B cell (primary cell): ENCODE measurements at regions of chr5 and their contacts with region 1.

Region 1: DNA sequence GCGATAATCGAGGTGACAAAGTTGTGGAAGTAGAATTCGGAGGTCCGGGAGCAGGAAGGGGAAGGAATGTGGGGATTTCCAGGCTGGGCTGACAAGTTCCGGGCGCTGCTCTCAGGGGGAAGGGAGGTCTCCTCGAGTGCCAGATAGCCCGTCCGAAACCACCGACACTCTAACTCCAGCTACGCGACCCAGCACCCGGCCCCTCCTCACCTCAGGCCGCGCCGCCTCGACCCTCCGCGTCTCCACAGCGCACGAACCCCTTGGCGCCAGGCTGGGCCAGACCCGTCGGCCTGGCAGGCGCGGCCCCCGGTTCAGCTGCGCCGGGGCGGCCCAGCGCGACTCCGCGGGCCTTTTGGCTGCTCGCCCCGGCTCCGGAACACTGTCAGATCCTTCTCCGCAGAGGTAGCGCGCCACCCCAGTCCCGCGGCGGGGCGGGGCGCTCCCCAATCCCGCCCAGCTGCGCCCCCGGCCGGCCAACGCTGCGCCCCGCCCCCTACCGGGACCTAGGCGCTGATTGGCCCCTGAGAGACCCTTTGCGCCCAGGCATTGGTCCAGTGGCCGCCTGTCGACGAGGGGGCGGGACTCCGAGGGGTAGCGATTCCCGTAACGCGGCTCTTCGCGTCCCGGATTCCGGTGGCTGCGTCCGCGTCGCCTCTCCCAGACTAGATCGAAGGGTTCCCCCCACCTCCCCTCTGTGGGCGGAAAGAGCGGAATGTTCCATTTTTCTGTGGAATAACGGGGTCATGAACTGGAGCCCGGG is at the start of gene IL6ST:
- DNase-seq: peak; percentile 96
- ATAC-seq: peak; percentile 94
- H3K4me3 ChIP-seq: peak within 1 kb of the TSS; percentile 75 to 97 (median 91)
- H3K4me3 Mint-ChIP-seq: peak within 1 kb of the TSS; percentile 89
- H3K27ac ChIP-seq: peak within 1 kb of the TSS; percentile 75 to 94
- H3K27ac Mint-ChIP-seq: peak within 1 kb of the TSS; percentile 78
- H3K4me1 ChIP-seq: peaks cover 11 to 18% of the 10 kb centered on the region in 2 donors
- H3K4me1 Mint-ChIP-seq: peaks cover 33% of the 10 kb centered on the region
- H3K27me3 ChIP-seq: no peaks in the 10 kb centered on the region
- H3K27me3 Mint-ChIP-seq: peaks cover 4% of the 10 kb centered on the region
- CTCF ChIP-seq: no peak
- total RNA-seq, gene IL6ST: 28.0 and 31.1 TPM in 2 replicates

Region 2: DNA sequence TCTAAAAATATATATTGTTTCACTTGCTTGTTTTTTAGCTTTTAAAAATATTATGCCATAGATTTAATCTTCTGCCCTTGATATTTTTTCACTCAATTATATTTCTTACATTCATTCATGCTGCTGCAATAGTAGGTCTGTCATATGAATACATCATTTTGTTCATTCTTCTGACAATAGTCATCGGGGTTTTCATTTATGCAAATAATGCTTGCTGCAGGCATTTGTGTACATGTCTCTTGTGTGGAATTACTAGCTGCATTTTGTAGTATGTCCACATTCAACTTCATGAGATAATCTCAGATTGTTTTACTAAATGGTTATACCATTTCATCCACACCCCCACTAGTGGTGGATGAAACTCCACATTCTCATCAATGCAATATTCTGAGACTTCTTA is 454.7 kb before region 1 on chr5:
- CTCF ChIA-PET with region 1: no interaction called
- POLR2A ChIA-PET with region 1: no interaction called
- intact Hi-C with region 1: loop called (anchors 5 kb)
- DNase-seq: no peak
- ATAC-seq: no peak
- H3K4me3 ChIP-seq: no peak overlapping the region
- H3K4me3 Mint-ChIP-seq: no peak overlapping the region
- H3K27ac ChIP-seq: no peak overlapping the region
- H3K27ac Mint-ChIP-seq: no peak overlapping the region
- H3K4me1 ChIP-seq: peaks cover 14 to 18% of the 10 kb centered on the region in 2 donors
- H3K4me1 Mint-ChIP-seq: peaks cover 22% of the 10 kb centered on the region
- H3K27me3 ChIP-seq: no peaks in the 10 kb centered on the region
- H3K27me3 Mint-ChIP-seq: no peaks in the 10 kb centered on the region
- CTCF ChIP-seq: no peak